Psoas muscle (tissue), 8 donors: ENCODE measurements at regions of chr2 and their contacts with region 1.

Region 1: DNA sequence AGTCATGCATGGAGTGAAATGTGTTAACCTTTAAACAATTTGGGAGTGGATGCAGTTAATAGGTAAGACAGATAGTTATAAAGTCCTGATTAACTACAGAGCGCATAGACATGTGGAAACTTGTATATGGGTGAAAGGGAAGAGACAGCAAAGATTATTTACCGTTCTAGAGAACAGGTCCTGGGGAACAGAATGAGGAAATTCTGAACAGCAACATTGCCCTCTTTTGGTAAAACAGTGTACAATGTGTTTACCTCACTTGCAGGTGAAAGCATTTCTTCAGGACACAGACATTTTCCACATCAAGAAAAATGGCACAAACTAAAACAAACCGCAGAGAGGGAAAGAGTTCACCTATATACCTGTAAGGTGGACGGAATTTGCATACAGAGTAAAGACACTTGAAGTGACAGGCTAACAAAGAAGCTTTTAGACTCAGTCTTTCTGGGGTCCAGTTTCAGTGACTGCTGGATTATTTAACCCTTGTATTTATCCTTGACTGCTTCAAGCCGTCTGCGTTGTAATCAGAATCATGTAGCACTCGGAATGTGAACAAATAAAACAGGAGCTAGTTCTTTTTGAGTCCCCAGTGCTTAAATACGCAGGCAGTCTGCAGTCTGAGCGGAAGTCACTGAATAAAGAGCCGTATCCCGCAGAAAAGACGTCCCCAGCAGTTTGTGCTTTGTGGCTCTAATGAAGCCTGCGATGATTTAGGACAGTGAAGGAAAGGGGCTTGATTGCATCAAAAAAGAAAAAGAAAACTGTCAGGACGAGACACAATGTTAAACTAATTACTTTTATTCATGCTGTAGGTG is 364.8 kb upstream of the GALNT5 start:
- DNase-seq: no peak
- ATAC-seq: peak; percentile 51 to 73 (median 56)
- H3K4me3 ChIP-seq: peak overlapping the region; percentile 46
- H3K27ac ChIP-seq: no peak overlapping the region
- H3K4me1 ChIP-seq: peaks cover 7% of the 10 kb centered on the region
- H3K27me3 ChIP-seq: no peaks in the 10 kb centered on the region
- CTCF ChIP-seq: peak; percentile 51

Region 2: GRCh38 chr2:156192468-156192867 is 700.2 kb before region 1 on chr2:
- intact Hi-C with region 1: loop called in 1 of 2 experiments (anchors 10 kb)
- DNase-seq: no peak
- ATAC-seq: no peak
- H3K4me3 ChIP-seq: no peak overlapping the region
- H3K27ac ChIP-seq: no peak overlapping the region
- H3K4me1 ChIP-seq: no peaks in the 10 kb centered on the region
- H3K27me3 ChIP-seq: no peaks in the 10 kb centered on the region
- CTCF ChIP-seq: no peak

Region 3: GRCh38 chr2:156332534-156333273 is 560.0 kb before region 1 on chr2 and contains the start of gene NR4A2:
- intact Hi-C with region 1: loop called in 1 of 2 experiments (anchors 10 kb)
- DNase-seq: peak; percentile 85 to 91
- ATAC-seq: peak; percentile 76 to 78 (median 76)
- H3K4me3 ChIP-seq: peak within 1 kb of the TSS; percentile 78
- H3K27ac ChIP-seq: peak within 1 kb of the TSS; percentile 93
- H3K4me1 ChIP-seq: peaks cover 15% of the 10 kb centered on the region
- H3K27me3 ChIP-seq: no peaks in the 10 kb centered on the region
- CTCF ChIP-seq: no peak
- total RNA-seq, gene NR4A2: 0.86 to 2.3 (median 1.3) TPM

Region 4: GRCh38 chr2:156589381-156590079 is 303.1 kb before region 1 on chr2:
- intact Hi-C with region 1: loop called in 1 of 2 experiments (anchors 5 kb)
- DNase-seq: no peak
- ATAC-seq: peak in 2 of 4 donors; percentile 67 to 72
- H3K4me3 ChIP-seq: no peak overlapping the region
- H3K27ac ChIP-seq: no peak overlapping the region
- H3K4me1 ChIP-seq: no peaks in the 10 kb centered on the region
- H3K27me3 ChIP-seq: no peaks in the 10 kb centered on the region
- CTCF ChIP-seq: peak; percentile 41